Prostate gland (tissue), 2 donors: ENCODE measurements at regions of chr3 and their contacts with region 1.

Region 1: GRCh38 chr3:29280404-29281093 is at the start of gene RBMS3:
- DNase-seq: peak; percentile 83
- H3K4me3 ChIP-seq: peak within 1 kb of the TSS; percentile 36 to 42
- H3K27ac ChIP-seq: peak within 1 kb of the TSS; percentile 78 to 79
- H3K4me1 ChIP-seq: no peaks in the 10 kb centered on the region
- H3K27me3 ChIP-seq: no peaks in the 10 kb centered on the region
- CTCF ChIP-seq: peak in 2 of 4 experiments; percentile 43 to 55
- POLR2A ChIP-seq: no peak
- total RNA-seq, gene RBMS3: 31.7 to 45.1 TPM

Region 2: GRCh38 chr3:28916713-28917499 is 363.6 kb before region 1 on chr3:
- intact Hi-C with region 1: loop called (anchors 10 kb)
- DNase-seq: peak; percentile 5
- H3K4me3 ChIP-seq: no peak overlapping the region
- H3K27ac ChIP-seq: no peak overlapping the region
- H3K4me1 ChIP-seq: no peaks in the 10 kb centered on the region
- H3K27me3 ChIP-seq: no peaks in the 10 kb centered on the region
- CTCF ChIP-seq: peak in 2 of 4 experiments; percentile 22 to 42
- POLR2A ChIP-seq: no peak

Region 3: GRCh38 chr3:29332195-29332637 is 51.7 kb after region 1 on chr3:
- intact Hi-C with region 1: loop called (anchors 5 kb)
- DNase-seq: peak; percentile 11
- H3K4me3 ChIP-seq: no peak overlapping the region
- H3K27ac ChIP-seq: peak overlapping the region in 1 of 2 donors; percentile 21
- H3K4me1 ChIP-seq: peaks cover 5% of the 10 kb centered on the region
- H3K27me3 ChIP-seq: no peaks in the 10 kb centered on the region
- CTCF ChIP-seq: no peak
- POLR2A ChIP-seq: no peak

Region 4: DNA sequence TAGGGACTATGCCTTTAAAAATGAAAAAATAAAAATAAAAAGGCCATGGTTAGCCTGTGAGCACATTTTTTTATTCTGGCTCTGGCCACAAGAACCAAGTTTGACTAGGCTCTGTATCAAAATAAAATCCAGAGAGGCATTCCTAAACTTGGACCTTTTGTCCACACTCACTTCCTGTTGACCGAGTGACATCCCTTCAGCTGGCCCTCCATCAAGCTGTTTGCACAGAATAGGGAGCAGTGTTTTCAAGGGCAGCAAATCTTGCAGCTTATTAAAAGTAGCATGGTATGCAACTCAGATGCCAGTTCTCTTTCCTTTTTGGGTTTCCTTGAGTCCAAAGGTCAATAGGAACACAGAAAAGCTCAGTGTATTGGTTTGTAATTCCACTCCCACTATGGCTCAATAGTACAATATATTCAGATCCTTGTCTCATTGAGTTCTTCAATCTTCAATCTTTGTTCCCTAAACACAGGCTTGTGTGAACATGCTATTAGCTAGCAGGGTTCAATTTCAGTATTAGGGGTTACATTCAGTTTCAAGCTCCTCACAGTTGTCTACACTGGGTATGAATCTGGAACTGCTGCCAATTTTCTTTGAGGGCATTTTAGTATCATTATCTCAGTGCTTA is 244.8 kb after region 1 on chr3:
- intact Hi-C with region 1: loop called (anchors 10 kb)
- DNase-seq: peak; percentile 77
- H3K4me3 ChIP-seq: no peak overlapping the region
- H3K27ac ChIP-seq: peak overlapping the region; percentile 18 to 40
- H3K4me1 ChIP-seq: no peaks in the 10 kb centered on the region
- H3K27me3 ChIP-seq: no peaks in the 10 kb centered on the region
- CTCF ChIP-seq: no peak
- POLR2A ChIP-seq: no peak

Region 5: GRCh38 chr3:29759411-29760225 is 479.1 kb after region 1 on chr3:
- intact Hi-C with region 1: loop called (anchors 2 kb)
- DNase-seq: peak; percentile 27
- H3K4me3 ChIP-seq: no peak overlapping the region
- H3K27ac ChIP-seq: peak overlapping the region; percentile 54 to 73
- H3K4me1 ChIP-seq: peaks cover 12% of the 10 kb centered on the region
- H3K27me3 ChIP-seq: no peaks in the 10 kb centered on the region
- CTCF ChIP-seq: no peak
- POLR2A ChIP-seq: no peak